Heart left ventricle (tissue), 16 donors: ENCODE measurements at regions of chr21 and their contacts with region 1.

Region 1: GRCh38 chr21:33332143-33332542 is 7.4 kb downstream of the IFNAR1 start:
- DNase-seq: no peak
- ATAC-seq: no peak
- H3K4me3 ChIP-seq: no peak overlapping the region
- H3K27ac ChIP-seq: no peak overlapping the region
- H3K4me1 ChIP-seq: peaks cover under 1 to 53% (median 22%) of the 10 kb centered on the region in 12 donors
- H3K27me3 ChIP-seq: no peaks in the 10 kb centered on the region
- CTCF ChIP-seq: no peak
- POLR2A ChIP-seq: no peak

Region 2: GRCh38 chr21:33266050-33266788 is 65.9 kb before region 1 on chr21 and contains the start of gene IL10RB:
- intact Hi-C with region 1: loop called in 2 of 10 experiments (anchors 5 to 10 kb)
- DNase-seq: peak; percentile 76 to 89 (median 82)
- ATAC-seq: peak; percentile 73 to 95 (median 92)
- H3K4me3 ChIP-seq: peak within 1 kb of the TSS; percentile 57 to 100 (median 82)
- H3K27ac ChIP-seq: peak within 1 kb of the TSS; percentile 69 to 98 (median 88)
- H3K4me1 ChIP-seq: peaks cover 0 to 66% (median 13%) of the 10 kb centered on the region in 12 donors
- H3K27me3 ChIP-seq: no peaks in the 10 kb centered on the region
- CTCF ChIP-seq: no peak
- POLR2A ChIP-seq: peak in 1 of 2 donors; percentile 65
- total RNA-seq, gene IL10RB: 4.5 to 28.2 (median 8.3) TPM